Activated T-helper 1 cell treated with anti-CD3 and anti-CD28 coated beads, Interleukin-12 subunit alpha, Interleukin-12 subunit beta, Interleukin-2, Interleukin-4 antibody, amounts not matched to agents 30 ng/mL and 10 ng/mL and 1 ng/mL, durations not matched to agents 14 hours and 24 hours and 36 hours (primary cell): ENCODE measurements at regions of chrX and their contacts with region 1.

Region 1: DNA sequence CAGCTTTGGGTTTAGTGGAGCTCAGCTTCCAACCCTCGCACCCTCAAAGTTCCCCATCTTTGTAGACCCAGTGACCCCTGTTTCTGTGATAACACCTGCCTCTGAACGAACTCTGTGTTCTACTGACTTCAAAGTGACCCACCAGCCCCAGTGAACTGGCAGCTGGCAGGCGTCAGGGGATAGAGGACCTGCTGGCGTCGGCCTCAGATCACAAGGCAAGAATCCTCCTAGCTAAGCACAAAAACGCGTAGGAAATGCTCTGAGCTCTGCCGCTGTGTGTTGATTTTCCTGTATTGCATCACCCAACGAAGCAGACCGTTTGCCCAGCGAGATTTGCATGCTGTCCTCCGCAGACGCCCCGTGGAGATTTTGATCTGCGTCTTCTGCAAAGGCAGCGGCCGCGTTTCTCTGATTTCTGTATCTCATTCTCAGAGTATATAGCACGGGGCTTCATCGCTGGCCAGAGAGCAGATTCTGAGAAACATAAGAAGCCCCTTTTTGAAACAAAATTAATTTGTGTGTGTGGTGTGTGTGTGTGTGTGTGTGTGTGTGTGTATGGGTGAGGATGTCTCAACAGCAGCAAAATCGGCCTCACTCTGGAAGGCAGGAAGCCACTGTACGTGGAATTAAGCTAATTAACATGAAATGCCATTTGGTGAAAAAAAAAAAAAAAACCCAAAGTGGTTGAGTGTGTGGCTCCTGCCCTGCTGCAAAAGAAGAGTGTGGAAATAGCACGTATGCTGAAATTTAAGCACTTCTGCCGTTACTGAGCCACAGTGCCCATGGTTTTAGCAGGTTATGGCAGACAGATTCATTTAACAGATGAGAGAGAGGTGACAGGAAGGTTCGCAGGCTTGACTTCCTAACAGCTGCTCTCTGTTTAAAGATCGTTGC is 29.2 kb upstream of the ASMTL start:
- DNase-seq: peak; percentile 78
- H3K4me3 Mint-ChIP-seq: peak overlapping the region; percentile 85
- H3K27ac Mint-ChIP-seq: peak overlapping the region; percentile 99
- H3K4me1 Mint-ChIP-seq: peaks cover 66% of the 10 kb centered on the region
- H3K27me3 Mint-ChIP-seq: no peaks in the 10 kb centered on the region

Region 2: GRCh38 chrX:1072637-1073377 is 409.1 kb before region 1 on chrX:
- intact Hi-C with region 1: no loop called
- DNase-seq: no peak
- H3K4me3 Mint-ChIP-seq: no peak overlapping the region
- H3K27ac Mint-ChIP-seq: no peak overlapping the region
- H3K4me1 Mint-ChIP-seq: peaks cover 6% of the 10 kb centered on the region
- H3K27me3 Mint-ChIP-seq: no peaks in the 10 kb centered on the region

Region 3: GRCh38 chrX:1140236-1140681 is 341.6 kb before region 1 on chrX:
- intact Hi-C with region 1: no loop called
- DNase-seq: no peak
- H3K4me3 Mint-ChIP-seq: no peak overlapping the region
- H3K27ac Mint-ChIP-seq: no peak overlapping the region
- H3K4me1 Mint-ChIP-seq: no peaks in the 10 kb centered on the region
- H3K27me3 Mint-ChIP-seq: no peaks in the 10 kb centered on the region

Region 4: GRCh38 chrX:1462596-1463251 is 19.2 kb before region 1 on chrX:
- intact Hi-C with region 1: loop called (anchors 1 kb)
- DNase-seq: peak; percentile 79
- H3K4me3 Mint-ChIP-seq: peak overlapping the region; percentile 77
- H3K27ac Mint-ChIP-seq: peak overlapping the region; percentile 90
- H3K4me1 Mint-ChIP-seq: peaks cover 58% of the 10 kb centered on the region
- H3K27me3 Mint-ChIP-seq: no peaks in the 10 kb centered on the region

Region 5: DNA sequence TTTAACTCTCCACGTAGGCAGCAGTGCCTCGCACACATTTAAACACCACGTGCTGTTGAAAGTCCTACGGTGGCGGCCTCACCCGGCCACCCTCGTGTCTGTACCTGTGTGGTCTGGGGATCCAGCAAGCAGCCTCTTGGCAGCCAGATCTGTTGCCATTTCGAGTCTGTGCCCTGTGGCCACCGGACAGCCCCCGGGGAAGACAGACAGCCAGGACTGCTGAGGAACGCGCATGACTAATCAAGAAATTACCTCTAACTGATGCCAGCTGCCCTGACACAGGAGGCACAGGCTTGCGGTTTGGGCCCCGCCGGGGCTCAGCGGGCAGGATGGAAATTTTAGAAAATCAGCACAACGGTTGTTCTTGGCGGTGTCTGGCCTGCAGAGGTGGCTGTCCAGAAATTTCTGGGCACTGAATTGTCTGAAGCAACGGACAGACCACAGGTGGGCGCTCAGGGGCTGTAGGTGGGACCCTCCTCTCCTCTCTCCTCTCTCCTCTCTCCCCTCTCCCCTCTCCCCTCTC is 13.6 kb before region 1 on chrX:
- intact Hi-C with region 1: loop called (anchors 1 kb)
- DNase-seq: peak; percentile 61
- H3K4me3 Mint-ChIP-seq: peak overlapping the region; percentile 73
- H3K27ac Mint-ChIP-seq: peak overlapping the region; percentile 96
- H3K4me1 Mint-ChIP-seq: peaks cover 88% of the 10 kb centered on the region
- H3K27me3 Mint-ChIP-seq: no peaks in the 10 kb centered on the region

Region 6: DNA sequence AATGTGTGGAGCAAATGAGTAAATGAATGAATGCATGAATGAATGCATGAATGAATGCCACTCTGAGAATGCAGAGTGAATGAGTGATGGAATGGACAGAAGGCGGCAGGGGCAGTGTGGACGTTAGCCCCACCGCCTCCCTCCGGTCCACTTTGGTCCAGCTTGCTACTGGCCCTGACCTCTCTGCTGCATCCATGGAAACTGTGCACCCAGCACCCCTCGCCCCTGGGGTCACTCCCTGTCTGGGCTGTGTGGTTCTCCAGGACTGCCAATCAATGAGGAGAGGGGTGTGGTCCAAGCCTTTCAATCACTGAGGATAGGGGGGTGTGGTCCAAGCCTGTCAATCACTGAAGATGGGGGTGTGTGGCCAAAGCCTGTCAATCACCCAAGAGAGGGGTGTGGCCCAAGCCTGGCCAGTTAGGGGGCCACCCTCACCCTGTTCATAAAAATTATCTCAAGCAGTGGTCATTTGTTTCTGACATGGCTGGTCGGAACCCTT is 10.0 kb after region 1 on chrX:
- intact Hi-C with region 1: loop called (anchors 1 kb)
- DNase-seq: peak; percentile 51
- H3K4me3 Mint-ChIP-seq: no peak overlapping the region
- H3K27ac Mint-ChIP-seq: peak overlapping the region; percentile 62
- H3K4me1 Mint-ChIP-seq: peaks cover 29% of the 10 kb centered on the region
- H3K27me3 Mint-ChIP-seq: no peaks in the 10 kb centered on the region

Region 7: GRCh38 chrX:1500701-1501624 is 19.1 kb after region 1 on chrX:
- intact Hi-C with region 1: loop called (anchors 2 kb)
- DNase-seq: peak; percentile 30
- H3K4me3 Mint-ChIP-seq: peak overlapping the region; percentile 10
- H3K27ac Mint-ChIP-seq: peak overlapping the region; percentile 79
- H3K4me1 Mint-ChIP-seq: peaks cover 28% of the 10 kb centered on the region
- H3K27me3 Mint-ChIP-seq: no peaks in the 10 kb centered on the region